PC-3 (cell line): ENCODE measurements at regions of chr5 and their contacts with region 1.

Region 1: DNA sequence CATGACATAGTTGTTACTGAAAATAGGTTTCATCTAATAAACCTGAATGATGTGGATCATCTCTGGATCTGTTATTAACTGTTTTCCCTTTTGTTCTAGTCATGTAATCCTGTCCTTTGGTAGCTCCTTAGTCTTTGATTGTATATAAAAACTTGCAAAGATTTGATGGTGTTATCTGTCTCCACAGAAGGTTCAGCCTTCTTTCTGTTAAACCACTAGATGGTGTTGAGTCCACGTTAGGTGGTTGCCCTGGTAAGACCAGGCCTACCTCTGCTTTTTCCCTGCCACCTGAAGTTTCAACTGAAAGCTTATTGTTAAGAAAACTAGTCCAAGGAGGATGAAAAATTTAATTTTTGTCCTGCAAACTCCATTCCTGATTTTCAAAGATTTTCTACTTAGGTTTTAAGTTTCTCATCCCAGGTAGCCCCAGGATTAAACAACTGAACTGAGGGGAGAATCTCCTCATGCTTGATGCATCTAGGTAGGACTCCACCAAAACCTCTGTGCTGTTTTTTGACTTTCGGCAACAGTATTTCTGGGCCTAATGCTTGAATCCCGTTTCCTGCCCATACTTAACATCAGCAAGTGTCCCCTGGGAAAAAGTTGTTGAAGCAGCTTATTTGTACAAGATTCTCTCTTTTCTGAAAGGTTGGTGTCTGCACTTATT is 68.5 kb downstream of the RICTOR start:
- DNase-seq: peak; percentile 55
- ATAC-seq: peak; percentile 79
- H3K4me3 ChIP-seq: no peak overlapping the region
- H3K27ac ChIP-seq: no peak overlapping the region
- H3K4me1 ChIP-seq: no peaks in the 10 kb centered on the region
- H3K27me3 ChIP-seq: no peaks in the 10 kb centered on the region
- CTCF ChIP-seq: peak; percentile 80

Region 2: DNA sequence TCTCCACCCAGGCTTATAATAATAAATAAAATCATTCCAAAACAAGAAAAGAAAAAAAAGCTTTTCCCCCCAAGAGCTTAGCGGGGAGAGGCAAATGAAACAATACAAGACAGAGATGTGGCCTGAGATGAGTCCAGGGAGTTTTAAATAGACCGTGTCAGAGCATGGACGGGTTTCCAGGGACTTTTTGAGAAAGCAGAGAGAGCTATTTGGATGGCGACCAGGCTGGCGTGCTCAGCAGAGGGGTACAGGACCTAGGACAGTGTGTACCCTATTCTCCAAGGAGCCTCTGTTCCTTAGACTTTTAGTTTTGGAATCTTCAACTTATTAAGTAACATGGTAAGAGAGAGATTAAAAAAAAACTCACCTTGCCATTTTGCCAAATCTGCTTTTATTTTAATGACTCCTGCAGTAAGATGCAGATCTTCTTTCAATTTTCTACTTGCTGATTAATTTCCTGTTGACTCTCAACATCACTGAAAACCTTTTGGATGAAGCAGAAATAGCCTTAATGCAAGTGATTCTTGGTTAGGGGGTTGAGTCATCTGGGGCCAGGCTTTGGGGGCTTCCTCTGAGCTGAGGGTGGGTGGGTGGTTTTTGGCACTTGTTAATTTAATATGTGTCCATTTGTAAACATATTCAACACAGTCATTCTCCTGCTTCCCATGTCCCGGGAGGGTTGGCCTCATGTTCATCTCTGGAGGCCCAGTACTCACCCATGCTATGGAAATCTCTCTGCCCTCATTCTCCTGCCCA is 209.5 kb before region 1 on chr5:
- CTCF ChIA-PET with region 1: no interaction called
- POLR2A ChIA-PET with region 1: no interaction called
- intact Hi-C with region 1: no loop called
- DNase-seq: peak; percentile 17
- ATAC-seq: peak; percentile 71
- H3K4me3 ChIP-seq: no peak overlapping the region
- H3K27ac ChIP-seq: peak overlapping the region; percentile 46
- H3K4me1 ChIP-seq: peaks cover 15% of the 10 kb centered on the region
- H3K27me3 ChIP-seq: no peaks in the 10 kb centered on the region
- CTCF ChIP-seq: no peak

Region 3: GRCh38 chr5:38905516-38905915 is 100.2 kb before region 1 on chr5:
- CTCF ChIA-PET with region 1: no interaction called
- POLR2A ChIA-PET with region 1: no interaction called
- intact Hi-C with region 1: no loop called
- DNase-seq: peak; percentile 76
- ATAC-seq: peak; percentile 87
- H3K4me3 ChIP-seq: no peak overlapping the region
- H3K27ac ChIP-seq: no peak overlapping the region
- H3K4me1 ChIP-seq: peaks cover 8% of the 10 kb centered on the region
- H3K27me3 ChIP-seq: no peaks in the 10 kb centered on the region
- CTCF ChIP-seq: no peak

Region 4: GRCh38 chr5:38968665-38969064 is 37.0 kb before region 1 on chr5:
- CTCF ChIA-PET with region 1: no interaction called
- POLR2A ChIA-PET with region 1: no interaction called
- intact Hi-C with region 1: no loop called
- DNase-seq: peak; percentile 11
- ATAC-seq: no peak
- H3K4me3 ChIP-seq: no peak overlapping the region
- H3K27ac ChIP-seq: no peak overlapping the region
- H3K4me1 ChIP-seq: no peaks in the 10 kb centered on the region
- H3K27me3 ChIP-seq: no peaks in the 10 kb centered on the region
- CTCF ChIP-seq: no peak

Region 5: GRCh38 chr5:39040875-39041274 is 35.2 kb after region 1 on chr5:
- CTCF ChIA-PET with region 1: no interaction called
- POLR2A ChIA-PET with region 1: interaction called, 7 read pairs
- intact Hi-C with region 1: loop called (anchors 5 kb)
- DNase-seq: no peak
- ATAC-seq: no peak
- H3K4me3 ChIP-seq: no peak overlapping the region
- H3K27ac ChIP-seq: no peak overlapping the region
- H3K4me1 ChIP-seq: no peaks in the 10 kb centered on the region
- H3K27me3 ChIP-seq: no peaks in the 10 kb centered on the region
- CTCF ChIP-seq: no peak

Region 6: DNA sequence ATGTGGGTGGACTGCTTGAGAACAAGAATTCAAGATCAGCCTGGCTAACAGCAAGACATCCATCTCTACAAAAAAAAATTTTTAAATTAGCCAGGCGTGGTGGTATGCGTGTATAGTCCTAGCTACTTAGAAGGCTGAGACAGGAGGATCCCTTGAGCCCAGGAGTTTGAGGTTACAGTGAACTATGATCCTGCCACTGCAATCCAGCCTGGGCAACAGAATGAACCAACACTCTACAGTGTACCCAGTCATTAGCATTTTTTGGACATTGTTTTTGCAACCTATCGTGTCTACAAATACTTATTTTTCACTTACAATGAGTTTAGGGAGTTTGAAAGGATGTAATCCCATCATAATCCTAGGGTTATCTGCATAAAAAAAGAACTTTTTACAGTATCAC is 46.4 kb after region 1 on chr5:
- CTCF ChIA-PET with region 1: no interaction called
- POLR2A ChIA-PET with region 1: no interaction called
- intact Hi-C with region 1: no loop called
- DNase-seq: no peak
- ATAC-seq: no peak
- H3K4me3 ChIP-seq: no peak overlapping the region
- H3K27ac ChIP-seq: no peak overlapping the region
- H3K4me1 ChIP-seq: peaks cover 3% of the 10 kb centered on the region; the same call in 1 of the 2 replicates
- H3K27me3 ChIP-seq: no peaks in the 10 kb centered on the region
- CTCF ChIP-seq: no peak

Region 7: GRCh38 chr5:39116347-39117170 is 110.9 kb after region 1 on chr5:
- CTCF ChIA-PET with region 1: no interaction called
- POLR2A ChIA-PET with region 1: interaction called, 10 read pairs
- intact Hi-C with region 1: no loop called
- DNase-seq: no peak
- ATAC-seq: no peak
- H3K4me3 ChIP-seq: no peak overlapping the region
- H3K27ac ChIP-seq: peak overlapping the region; percentile 82
- H3K4me1 ChIP-seq: peaks cover 64% of the 10 kb centered on the region
- H3K27me3 ChIP-seq: no peaks in the 10 kb centered on the region
- CTCF ChIP-seq: no peak

Region 8: DNA sequence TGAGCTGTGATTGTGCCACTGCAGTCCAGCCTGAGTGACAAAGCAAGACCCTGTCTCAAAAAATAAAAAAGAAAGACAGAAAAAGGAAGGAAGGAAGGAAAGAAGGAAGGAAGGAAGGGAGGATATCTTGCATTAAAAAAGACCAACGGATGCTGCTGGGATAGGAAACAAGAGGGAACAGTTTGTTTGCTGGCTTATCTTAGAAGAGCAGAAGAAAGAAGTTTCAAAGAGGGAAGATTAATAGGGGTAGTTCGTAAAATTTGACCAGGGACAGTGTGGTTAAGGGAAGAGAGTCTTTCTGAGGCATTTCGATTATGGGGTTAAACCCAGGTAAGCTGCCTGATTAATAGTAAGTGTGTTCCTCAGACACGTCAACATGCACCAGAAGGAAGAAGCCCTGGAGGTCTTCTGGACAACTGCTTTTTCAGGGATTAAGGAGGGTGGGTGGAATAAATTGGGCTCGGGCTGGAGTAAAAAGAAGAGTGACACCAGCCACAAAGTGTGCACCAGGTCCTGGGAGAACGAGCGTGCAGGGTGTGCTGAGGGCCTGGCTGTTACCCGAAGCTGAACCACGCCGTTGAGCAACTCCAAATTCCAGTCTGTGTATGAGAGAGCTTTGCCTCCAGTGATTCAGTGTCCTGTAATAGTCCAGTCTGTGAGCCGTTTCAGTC is 188.9 kb after region 1 on chr5:
- CTCF ChIA-PET with region 1: no interaction called
- POLR2A ChIA-PET with region 1: no interaction called
- intact Hi-C with region 1: loop called (anchors 10 kb)
- DNase-seq: peak; percentile 82
- ATAC-seq: peak; percentile 21; the same call in 1 of the 2 replicates
- H3K4me3 ChIP-seq: no peak overlapping the region
- H3K27ac ChIP-seq: peak overlapping the region; percentile 90
- H3K4me1 ChIP-seq: peaks cover 46% of the 10 kb centered on the region
- H3K27me3 ChIP-seq: no peaks in the 10 kb centered on the region
- CTCF ChIP-seq: no peak

Region 9: DNA sequence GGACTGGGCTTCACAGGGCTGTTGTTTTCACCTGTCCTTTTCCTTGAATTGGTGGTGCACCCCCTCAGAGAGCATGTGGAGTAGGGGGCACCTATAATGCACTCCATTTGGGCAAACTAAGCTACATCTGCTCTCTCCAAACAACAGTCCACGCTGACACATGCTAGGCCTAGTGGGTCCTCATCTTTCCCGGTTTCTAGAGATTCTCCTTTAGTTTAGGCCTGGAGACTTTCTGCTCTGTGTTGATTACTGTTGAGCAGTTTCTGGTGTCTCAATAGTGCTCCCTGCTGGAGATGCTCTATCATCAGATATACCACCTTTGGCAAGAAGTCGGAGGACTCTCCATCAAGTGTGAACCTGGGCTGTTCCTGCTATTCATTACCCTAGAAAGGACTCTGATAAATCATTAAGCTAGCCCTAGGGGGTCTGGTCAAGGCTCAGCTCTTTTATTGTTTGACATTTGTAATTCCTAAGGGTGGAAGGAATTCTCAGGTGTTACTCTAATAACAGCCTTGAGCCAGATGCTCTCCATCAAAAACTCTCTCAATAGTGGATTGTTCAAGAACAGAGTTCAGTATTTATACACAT is 277.6 kb after region 1 on chr5:
- CTCF ChIA-PET with region 1: no interaction called
- POLR2A ChIA-PET with region 1: no interaction called
- intact Hi-C with region 1: loop called (anchors 2 kb)
- DNase-seq: peak; percentile 90
- ATAC-seq: peak; percentile 97
- H3K4me3 ChIP-seq: no peak overlapping the region
- H3K27ac ChIP-seq: no peak overlapping the region
- H3K4me1 ChIP-seq: peaks cover 7% of the 10 kb centered on the region
- H3K27me3 ChIP-seq: no peaks in the 10 kb centered on the region
- CTCF ChIP-seq: peak; percentile 94